BJ (cell line): ENCODE measurements at regions of chr21 and their contacts with region 1.

Region 1: DNA sequence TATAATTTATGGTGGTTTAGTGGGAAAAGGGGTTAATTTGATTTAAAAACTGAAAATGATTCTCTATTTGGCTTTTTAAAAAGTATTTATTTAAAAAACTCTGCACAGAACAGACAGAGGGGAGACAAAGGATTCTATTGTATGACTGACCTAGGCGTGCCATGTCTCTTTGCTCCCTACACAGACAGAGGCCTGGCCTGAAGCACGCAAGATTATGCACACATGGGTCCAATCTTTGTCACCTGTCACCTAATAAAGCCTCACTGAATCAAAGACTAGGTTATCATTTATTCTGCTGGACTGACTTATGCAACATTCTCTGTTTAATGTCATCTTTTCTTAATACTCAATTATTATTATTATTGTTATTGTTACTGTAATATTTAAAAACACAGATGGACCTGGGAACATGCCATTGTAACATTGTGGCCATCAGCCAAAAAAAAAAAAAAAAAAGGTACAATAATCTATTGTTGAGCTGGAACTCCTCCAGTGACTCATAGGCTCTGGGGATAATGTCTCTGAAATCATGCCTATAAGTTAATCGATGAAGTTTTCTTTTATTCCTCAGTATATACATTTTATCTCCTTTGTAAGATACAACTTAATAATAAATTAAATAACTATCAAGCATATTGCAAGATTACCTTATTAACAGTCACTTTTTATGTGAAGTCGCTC is 112.1 kb downstream of the RUNX1 start:
- DNase-seq: no peak
- H3K4me3 ChIP-seq: no peak overlapping the region
- H3K27me3 ChIP-seq: no peaks in the 10 kb centered on the region
- CTCF ChIP-seq: no peak

Region 2: DNA sequence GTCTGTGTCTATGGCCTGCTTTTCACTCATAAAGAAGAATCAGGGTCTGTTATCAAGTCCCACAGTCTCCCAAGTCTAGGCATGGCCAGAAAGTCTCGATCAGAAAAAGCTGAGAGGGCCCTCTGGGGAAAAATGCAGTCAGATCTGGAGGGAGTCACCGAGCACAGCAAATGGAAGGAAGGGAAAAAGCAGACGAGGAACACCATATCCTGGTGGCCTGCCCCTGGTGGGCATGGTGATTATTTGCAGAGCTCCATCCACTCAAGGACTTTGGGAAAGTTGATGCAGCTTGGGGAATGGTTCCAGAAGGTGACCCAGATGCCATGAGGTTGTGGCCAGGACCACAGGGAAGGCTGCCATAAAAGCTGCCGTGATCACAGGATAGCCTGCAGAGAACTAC is 79.1 kb before region 1 on chr21:
- CTCF ChIA-PET with region 1: no interaction called
- POLR2A ChIA-PET with region 1: no interaction called
- DNase-seq: no peak
- H3K4me3 ChIP-seq: no peak overlapping the region
- H3K27me3 ChIP-seq: no peaks in the 10 kb centered on the region
- CTCF ChIP-seq: peak; percentile 43

Region 3: GRCh38 chr21:34974162-34974981 is 37.3 kb after region 1 on chr21:
- CTCF ChIA-PET with region 1: no interaction called
- POLR2A ChIA-PET with region 1: no interaction called
- DNase-seq: no peak
- H3K4me3 ChIP-seq: no peak overlapping the region
- H3K27me3 ChIP-seq: no peaks in the 10 kb centered on the region
- CTCF ChIP-seq: no peak

Region 4: DNA sequence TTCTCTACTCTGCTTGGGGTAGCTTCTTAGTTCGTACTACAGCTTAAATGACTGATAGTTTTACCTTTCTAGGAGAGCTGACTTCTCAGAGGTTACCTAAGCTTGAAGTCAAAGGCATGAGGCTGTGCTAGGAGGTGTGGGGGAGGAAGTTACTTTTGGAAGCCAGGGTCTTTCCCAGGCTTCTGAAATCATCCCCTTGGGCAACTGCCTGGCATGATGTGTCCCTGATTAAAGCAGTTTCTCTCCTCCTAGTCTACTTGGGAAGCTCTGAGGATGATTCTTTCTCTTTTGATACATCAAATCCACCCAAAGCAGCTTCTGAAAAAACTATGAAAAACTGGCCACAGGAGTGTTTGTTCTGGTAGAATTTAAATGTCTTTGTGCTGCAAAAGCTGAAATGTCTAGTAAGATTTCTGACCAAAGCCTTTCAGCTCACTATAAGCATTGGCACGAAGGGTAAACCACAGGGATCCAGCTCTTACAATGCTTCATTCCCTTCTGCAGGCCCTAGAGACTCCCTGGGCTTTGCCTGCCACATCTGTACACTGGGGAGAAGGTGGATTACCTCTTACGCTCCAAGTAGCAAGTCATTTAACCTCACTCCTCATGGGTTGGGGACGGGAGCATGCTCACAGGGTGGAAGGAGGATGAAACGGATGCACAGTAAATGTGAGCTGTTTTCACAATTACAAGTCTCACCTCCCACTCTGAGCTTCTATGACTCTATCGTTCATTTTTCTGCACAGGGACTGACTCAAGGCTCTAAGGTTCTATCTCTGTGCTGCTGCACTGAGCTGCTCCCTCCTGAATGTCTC is 52.5 kb after region 1 on chr21:
- CTCF ChIA-PET with region 1: no interaction called
- POLR2A ChIA-PET with region 1: interaction called, 10 read pairs
- DNase-seq: no peak
- H3K4me3 ChIP-seq: no peak overlapping the region
- H3K27me3 ChIP-seq: no peaks in the 10 kb centered on the region
- CTCF ChIP-seq: no peak